Motor neuron (in vitro differentiated cells): ENCODE measurements at regions of chr21 and their contacts with region 1.

Region 1: DNA sequence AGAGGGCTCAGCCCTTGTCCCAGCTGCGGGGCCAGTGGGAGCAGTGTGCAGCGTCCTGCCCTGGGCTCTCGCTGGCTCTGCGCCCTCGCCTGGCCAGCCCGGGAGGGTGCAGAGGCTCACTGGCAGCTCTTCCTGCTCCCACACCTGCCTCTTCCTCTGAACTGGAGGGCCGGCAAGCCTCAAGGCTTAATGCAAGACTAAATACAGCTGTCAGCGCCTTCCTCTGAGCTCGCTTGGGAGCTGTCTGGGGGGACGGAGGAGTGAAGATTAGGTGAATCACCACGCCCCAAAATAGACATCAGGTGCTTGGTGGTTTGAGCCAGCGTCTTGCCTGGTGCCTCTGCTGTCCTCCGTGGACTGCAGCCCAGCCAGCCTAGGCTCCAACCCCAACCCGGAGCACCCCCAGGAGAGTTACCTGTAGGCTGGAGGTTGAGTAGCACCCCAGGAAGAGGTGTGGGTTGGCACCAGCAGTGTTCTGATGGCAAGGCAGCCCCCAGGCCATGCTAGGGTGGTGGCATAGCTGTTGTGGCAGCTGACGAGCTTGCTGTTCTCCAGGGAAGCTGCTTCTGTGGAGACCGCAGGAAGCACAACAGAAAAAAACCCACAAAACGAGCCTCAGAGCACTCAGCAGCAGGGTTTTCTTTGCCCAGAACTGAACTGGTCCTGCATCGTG is 36.9 kb downstream of the UMODL1 start:
- ATAC-seq: peak; percentile 93 to 99 (median 96)
- H3K4me3 ChIP-seq: no peak overlapping the region
- H3K27ac ChIP-seq: no peak overlapping the region
- H3K4me1 ChIP-seq: peaks cover 2 to 6% of the 10 kb centered on the region in 2 donors

Region 2: GRCh38 chr21:41612674-41613532 is 495.1 kb before region 1 on chr21:
- in situ Hi-C with region 1: loop called in 1 of 9 experiments (anchors 25 kb)
- ATAC-seq: peak; percentile 74 to 81 (median 80)
- H3K4me3 ChIP-seq: no peak overlapping the region
- H3K27ac ChIP-seq: no peak overlapping the region
- H3K4me1 ChIP-seq: peaks cover 6 to 12% of the 10 kb centered on the region in 2 donors

Region 3: GRCh38 chr21:41868062-41868710 is 239.8 kb before region 1 on chr21:
- in situ Hi-C with region 1: loop called in 1 of 9 experiments (anchors 25 kb)
- ATAC-seq: peak in 6 of 8 experiments; percentile 70 to 88 (median 78)
- H3K4me3 ChIP-seq: no peak overlapping the region
- H3K27ac ChIP-seq: peak overlapping the region in 1 of 2 donors; percentile 24
- H3K4me1 ChIP-seq: peaks cover 17 to 23% of the 10 kb centered on the region in 2 donors

Region 4: DNA sequence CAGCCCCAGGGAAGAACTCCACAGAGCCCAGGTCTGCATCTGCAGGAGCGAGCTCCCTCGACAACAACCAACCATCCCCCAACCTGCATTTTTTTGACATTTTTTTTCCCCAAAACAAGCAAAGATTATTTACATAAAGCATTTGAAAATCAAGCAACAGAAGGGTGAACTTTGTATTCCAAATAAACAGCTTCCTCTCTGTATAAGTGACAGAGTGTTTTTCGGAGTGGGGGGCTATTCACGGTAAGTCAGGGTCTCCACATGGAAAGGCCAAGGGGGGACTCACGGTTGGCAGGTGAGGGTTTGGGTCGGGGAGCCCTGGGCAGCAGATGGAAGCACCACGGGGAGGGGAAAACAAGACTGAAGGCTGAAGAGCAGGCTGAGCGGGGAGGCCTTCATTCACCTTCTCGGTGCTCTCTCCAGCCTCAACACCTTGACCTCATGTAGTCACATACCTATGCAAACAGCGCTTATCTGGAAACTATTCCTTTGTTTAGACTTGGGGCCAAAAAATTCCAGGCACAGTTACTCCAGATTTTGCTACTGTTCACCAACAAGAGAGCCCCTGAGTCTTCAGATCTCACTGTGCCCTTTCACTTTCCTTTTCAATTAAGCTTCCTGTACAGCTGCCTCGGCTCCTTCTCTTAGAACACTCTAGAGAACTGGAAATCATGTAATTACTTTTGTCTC is 181.8 kb before region 1 on chr21:
- in situ Hi-C with region 1: loop called in 1 of 9 experiments (anchors 25 kb)
- ATAC-seq: peak in 4 of 8 experiments; percentile 48 to 89 (median 80)
- H3K4me3 ChIP-seq: no peak overlapping the region
- H3K27ac ChIP-seq: no peak overlapping the region
- H3K4me1 ChIP-seq: peaks cover 0 to 7% of the 10 kb centered on the region in 2 donors

Region 5: GRCh38 chr21:42009831-42010523 is 98.0 kb before region 1 on chr21 and contains the start of gene ZBTB21:
- in situ Hi-C with region 1: loop called in 1 of 9 experiments (anchors 25 kb)
- ATAC-seq: peak; percentile 80 to 90 (median 87)
- H3K4me3 ChIP-seq: peak within 1 kb of the TSS; percentile 61 to 96 (median 75)
- H3K27ac ChIP-seq: peak within 1 kb of the TSS; percentile 96
- H3K4me1 ChIP-seq: peaks cover 6 to 7% of the 10 kb centered on the region in 2 donors
- total RNA-seq, gene ZBTB21: 9.0 to 22.3 (median 14.2) TPM